Breast epithelium (tissue), 4 donors: ENCODE measurements at regions of chr10 and their contacts with region 1.

Region 1: GRCh38 chr10:10120671-10121070 is 897.0 kb upstream of the CELF2 start:
- DNase-seq: no peak
- H3K4me3 ChIP-seq: no peak overlapping the region
- H3K27ac ChIP-seq: no peak overlapping the region
- H3K4me1 ChIP-seq: no peaks in the 10 kb centered on the region
- H3K27me3 ChIP-seq: no peaks in the 10 kb centered on the region
- CTCF ChIP-seq: no peak
- POLR2A ChIP-seq: no peak

Region 2: GRCh38 chr10:10014846-10015245 is 105.8 kb before region 1 on chr10:
- intact Hi-C with region 1: no loop called
- DNase-seq: no peak
- H3K4me3 ChIP-seq: no peak overlapping the region
- H3K27ac ChIP-seq: no peak overlapping the region
- H3K4me1 ChIP-seq: no peaks in the 10 kb centered on the region
- H3K27me3 ChIP-seq: no peaks in the 10 kb centered on the region
- CTCF ChIP-seq: no peak
- POLR2A ChIP-seq: no peak

Region 3: GRCh38 chr10:10094691-10095090 is 26.0 kb before region 1 on chr10:
- intact Hi-C with region 1: no loop called
- DNase-seq: no peak
- H3K4me3 ChIP-seq: no peak overlapping the region
- H3K27ac ChIP-seq: no peak overlapping the region
- H3K4me1 ChIP-seq: no peaks in the 10 kb centered on the region
- H3K27me3 ChIP-seq: no peaks in the 10 kb centered on the region
- CTCF ChIP-seq: no peak
- POLR2A ChIP-seq: no peak

Region 4: DNA sequence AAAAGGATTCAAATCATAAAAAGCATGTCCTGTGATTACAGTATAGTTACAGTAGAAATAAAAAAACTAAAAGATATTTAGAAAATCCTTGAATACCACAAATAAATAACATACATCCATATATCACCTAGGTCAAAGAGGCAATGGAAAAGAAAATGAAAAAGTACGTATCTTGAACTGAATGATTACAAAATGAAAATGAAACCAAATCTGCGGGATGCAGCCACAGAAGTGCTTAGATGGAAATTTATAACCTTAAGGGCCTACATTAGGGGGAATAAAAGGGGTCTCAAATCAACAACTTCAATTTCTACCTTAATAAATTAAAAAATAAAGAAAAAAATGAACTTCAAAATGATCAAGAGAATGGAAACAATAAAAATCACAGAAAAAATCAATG is 18.0 kb after region 1 on chr10:
- intact Hi-C with region 1: no loop called
- DNase-seq: no peak
- H3K4me3 ChIP-seq: peak overlapping the region; percentile 8 to 9 (median 9)
- H3K27ac ChIP-seq: no peak overlapping the region
- H3K4me1 ChIP-seq: no peaks in the 10 kb centered on the region
- H3K27me3 ChIP-seq: no peaks in the 10 kb centered on the region
- CTCF ChIP-seq: no peak
- POLR2A ChIP-seq: no peak

Region 5: GRCh38 chr10:11074536-11075267 is 954.0 kb after region 1 on chr10:
- intact Hi-C with region 1: loop called (anchors 5 kb)
- DNase-seq: no peak
- H3K4me3 ChIP-seq: no peak overlapping the region
- H3K27ac ChIP-seq: no peak overlapping the region
- H3K4me1 ChIP-seq: no peaks in the 10 kb centered on the region
- H3K27me3 ChIP-seq: no peaks in the 10 kb centered on the region
- CTCF ChIP-seq: no peak
- POLR2A ChIP-seq: no peak